Activated CD4-positive, alpha-beta T cell treated with anti-CD3 and anti-CD28 coated beads, Interleukin-2, amount 10 ng/mL, durations not matched to agents 7 days and 5 days (primary cell): ENCODE measurements at regions of chr2 and their contacts with region 1.

Region 1: DNA sequence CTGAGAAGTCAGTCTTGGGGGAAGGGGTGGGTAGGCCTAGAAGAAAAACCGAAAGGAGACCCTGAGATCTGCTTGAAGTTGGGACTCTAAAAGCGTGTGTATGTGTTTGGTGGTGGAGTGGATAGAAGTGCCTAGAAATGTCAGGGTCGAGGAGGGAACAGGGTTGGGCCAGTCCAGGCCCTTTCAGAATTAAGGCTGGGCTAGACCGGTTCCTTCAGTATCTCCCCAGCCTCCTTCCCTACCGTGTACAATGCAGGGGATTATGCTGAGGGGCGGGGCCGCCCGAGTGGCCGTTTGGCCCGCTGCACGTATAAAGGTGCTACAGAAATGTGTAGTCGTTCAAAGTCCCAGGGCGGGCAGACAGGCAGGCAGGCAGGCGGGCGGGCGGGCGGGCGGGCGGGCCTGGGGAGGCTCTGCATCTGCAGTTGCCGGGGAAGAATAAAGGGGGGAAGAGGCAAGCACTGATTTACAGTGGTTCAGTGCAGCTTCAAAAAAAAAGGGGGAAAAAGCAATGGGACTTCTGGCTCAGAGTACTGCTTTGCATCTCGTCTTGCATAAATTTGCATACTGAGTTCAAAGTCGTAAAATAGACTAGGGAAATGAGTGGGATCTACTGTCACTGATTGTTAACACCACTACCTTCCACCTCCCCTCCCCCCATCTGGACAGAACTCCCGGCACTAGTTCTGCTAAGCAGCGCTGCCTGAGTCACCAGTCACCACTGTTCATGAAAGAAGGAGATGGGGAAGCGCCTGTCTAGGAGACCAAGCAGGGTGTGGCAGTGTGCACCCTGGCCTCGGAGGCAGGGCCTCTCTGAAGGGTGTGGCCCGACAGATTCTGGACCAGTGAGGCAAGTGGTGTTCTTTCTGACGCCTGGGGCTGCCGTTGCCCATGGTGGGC is 3.6 kb downstream of the IGFBP2 start:
- DNase-seq: no peak
- H3K4me3 Mint-ChIP-seq: no peak overlapping the region
- H3K27ac Mint-ChIP-seq: no peak overlapping the region
- H3K4me1 Mint-ChIP-seq: peaks cover 27% of the 10 kb centered on the region
- H3K27me3 Mint-ChIP-seq: peaks cover 55% of the 10 kb centered on the region

Region 2: GRCh38 chr2:216583147-216583546 is 53.7 kb before region 1 on chr2:
- CTCF ChIA-PET with region 1: no interaction called
- POLR2A ChIA-PET with region 1: no interaction called
- DNase-seq: no peak
- H3K4me3 Mint-ChIP-seq: no peak overlapping the region
- H3K27ac Mint-ChIP-seq: no peak overlapping the region
- H3K4me1 Mint-ChIP-seq: no peaks in the 10 kb centered on the region
- H3K27me3 Mint-ChIP-seq: peaks cover 35% of the 10 kb centered on the region

Region 3: DNA sequence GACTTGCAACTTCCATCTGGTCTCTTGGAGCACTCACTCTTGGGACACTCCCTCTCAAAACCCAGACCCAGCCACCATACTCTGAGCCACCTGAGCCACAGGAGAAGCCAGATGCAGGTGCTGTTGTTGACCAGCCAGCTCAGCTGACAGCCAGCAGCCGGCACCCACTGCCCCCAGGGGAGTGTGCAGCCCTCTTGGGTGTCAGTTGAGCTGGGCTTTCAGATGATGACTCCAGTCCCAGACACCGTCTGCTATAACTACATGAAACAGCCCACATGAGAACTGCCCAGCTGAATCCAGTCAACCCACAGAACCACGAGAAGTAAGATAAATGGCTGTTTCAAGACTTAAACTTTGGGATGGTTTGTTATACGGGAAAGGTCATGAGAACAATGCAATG is 14.3 kb before region 1 on chr2:
- CTCF ChIA-PET with region 1: no interaction called
- POLR2A ChIA-PET with region 1: no interaction called
- DNase-seq: no peak
- H3K4me3 Mint-ChIP-seq: no peak overlapping the region
- H3K27ac Mint-ChIP-seq: no peak overlapping the region
- H3K4me1 Mint-ChIP-seq: peaks cover 9% of the 10 kb centered on the region
- H3K27me3 Mint-ChIP-seq: peaks cover 8% of the 10 kb centered on the region

Region 4: DNA sequence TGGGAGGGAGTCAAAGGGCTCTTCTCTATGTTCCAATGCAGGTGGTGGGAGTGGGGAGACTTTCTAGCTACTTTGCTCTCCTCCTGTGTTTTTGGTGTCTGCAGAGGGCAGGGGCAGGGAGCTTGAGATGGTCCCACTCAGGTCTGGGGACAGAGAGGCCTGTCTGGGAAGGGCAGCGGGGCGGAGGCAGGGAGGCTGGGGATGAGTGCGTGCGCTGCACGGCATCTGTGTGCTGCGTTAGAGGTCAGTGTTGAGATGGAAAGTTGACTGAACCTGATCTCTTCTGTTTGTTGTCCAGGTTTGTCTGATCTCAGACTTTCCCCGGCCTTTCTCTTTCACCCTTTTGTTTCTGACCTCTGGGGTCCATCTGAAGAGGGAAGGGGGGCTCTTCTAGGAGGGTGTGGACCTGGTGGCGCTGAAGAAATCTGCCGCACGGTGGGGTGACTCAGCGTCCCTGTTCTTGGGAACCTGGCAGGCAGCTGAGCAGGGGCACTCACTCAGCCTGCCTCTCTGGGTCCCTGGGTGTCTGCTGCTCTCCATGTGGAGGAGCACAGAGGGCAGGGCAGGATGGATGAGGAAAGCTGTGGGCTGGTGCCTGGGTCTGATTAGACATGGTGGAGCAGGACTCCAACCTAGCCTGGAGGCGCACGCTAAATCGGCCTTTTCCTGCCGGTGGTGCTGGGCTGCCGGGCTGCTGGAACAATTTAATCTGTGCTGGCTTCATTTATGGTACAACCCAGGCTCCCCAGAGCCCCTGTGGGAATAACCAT is 20.5 kb after region 1 on chr2:
- CTCF ChIA-PET with region 1: interaction called, 5 read pairs
- POLR2A ChIA-PET with region 1: interaction called, 11 read pairs
- DNase-seq: no peak
- H3K4me3 Mint-ChIP-seq: no peak overlapping the region
- H3K27ac Mint-ChIP-seq: no peak overlapping the region
- H3K4me1 Mint-ChIP-seq: peaks cover 6% of the 10 kb centered on the region
- H3K27me3 Mint-ChIP-seq: no peaks in the 10 kb centered on the region

Region 5: GRCh38 chr2:216960671-216961268 is 324.0 kb after region 1 on chr2:
- CTCF ChIA-PET with region 1: no interaction called
- POLR2A ChIA-PET with region 1: no interaction called
- DNase-seq: no peak
- H3K4me3 Mint-ChIP-seq: no peak overlapping the region
- H3K27ac Mint-ChIP-seq: no peak overlapping the region
- H3K4me1 Mint-ChIP-seq: no peaks in the 10 kb centered on the region
- H3K27me3 Mint-ChIP-seq: peaks cover 4% of the 10 kb centered on the region